Ascending aorta (tissue), 2 donors: ENCODE measurements at regions of chr3 and their contacts with region 1.

Region 1: DNA sequence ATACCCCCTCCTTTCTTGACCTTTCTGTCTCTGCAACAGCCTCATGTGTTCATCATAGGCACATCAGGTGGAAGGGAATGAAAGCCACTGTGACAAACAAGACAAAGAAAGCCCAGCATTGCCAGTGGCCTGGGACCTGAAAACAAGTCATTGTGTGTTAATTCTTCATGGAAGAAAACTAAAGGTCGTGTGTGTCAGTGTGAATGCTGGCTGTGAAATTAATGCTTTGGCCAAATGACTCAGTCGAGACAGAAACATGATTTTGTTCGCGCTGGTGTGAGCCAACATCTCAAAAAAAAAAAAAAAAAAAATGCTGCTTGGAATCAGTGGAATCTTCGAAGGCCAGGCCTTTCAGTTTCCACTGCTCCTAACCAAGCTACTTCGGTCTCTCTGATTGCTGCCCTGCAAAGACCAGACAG is 386.5 kb upstream of the PROK2 start:
- DNase-seq: peak in 1 of 2 donors; percentile 72
- H3K4me3 ChIP-seq: peak overlapping the region; percentile 37 to 39
- H3K27ac ChIP-seq: peak overlapping the region; percentile 87 to 91
- H3K4me1 ChIP-seq: peaks cover 16 to 37% of the 10 kb centered on the region in 2 donors
- H3K27me3 ChIP-seq: no peaks in the 10 kb centered on the region
- CTCF ChIP-seq: no peak

Region 2: GRCh38 chr3:71916745-71917369 is 254.6 kb before region 1 on chr3:
- intact Hi-C with region 1: no loop called
- DNase-seq: no peak
- H3K4me3 ChIP-seq: no peak overlapping the region
- H3K27ac ChIP-seq: no peak overlapping the region
- H3K4me1 ChIP-seq: no peaks in the 10 kb centered on the region
- H3K27me3 ChIP-seq: no peaks in the 10 kb centered on the region
- CTCF ChIP-seq: no peak

Region 3: DNA sequence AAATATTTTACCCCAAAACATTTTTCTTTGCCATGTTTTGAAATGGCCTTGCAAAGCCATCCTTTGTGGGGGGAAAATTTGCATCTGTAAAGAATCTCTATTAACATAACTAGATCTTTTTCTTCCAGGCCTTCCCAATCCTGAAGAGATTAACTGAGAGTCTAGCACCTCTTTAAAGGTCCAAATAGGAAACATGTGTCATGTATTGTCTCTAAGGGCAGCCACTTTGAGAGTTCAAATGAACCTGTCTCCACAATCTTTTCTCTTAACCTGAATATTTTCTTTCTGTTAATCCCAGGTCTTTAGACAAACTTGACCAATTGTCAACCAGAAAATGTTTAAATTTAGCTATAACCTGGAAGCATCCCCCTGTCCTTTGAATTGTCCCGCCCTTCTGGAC is 149.9 kb before region 1 on chr3:
- intact Hi-C with region 1: no loop called
- DNase-seq: no peak
- H3K4me3 ChIP-seq: no peak overlapping the region
- H3K27ac ChIP-seq: no peak overlapping the region
- H3K4me1 ChIP-seq: no peaks in the 10 kb centered on the region
- H3K27me3 ChIP-seq: no peaks in the 10 kb centered on the region
- CTCF ChIP-seq: no peak

Region 4: GRCh38 chr3:72100601-72101187 is 70.8 kb before region 1 on chr3:
- intact Hi-C with region 1: loop called (anchors 5 kb)
- DNase-seq: peak; percentile 80 to 95
- H3K4me3 ChIP-seq: peak overlapping the region; percentile 35 to 54
- H3K27ac ChIP-seq: no peak overlapping the region
- H3K4me1 ChIP-seq: peaks cover 0 to 6% of the 10 kb centered on the region in 2 donors
- H3K27me3 ChIP-seq: no peaks in the 10 kb centered on the region
- CTCF ChIP-seq: no peak

Region 5: GRCh38 chr3:72123908-72124441 is 47.5 kb before region 1 on chr3:
- intact Hi-C with region 1: loop called (anchors 2 kb)
- DNase-seq: peak in 1 of 2 donors; percentile 93
- H3K4me3 ChIP-seq: no peak overlapping the region
- H3K27ac ChIP-seq: peak overlapping the region; percentile 41 to 46
- H3K4me1 ChIP-seq: peaks cover 10 to 21% of the 10 kb centered on the region in 2 donors
- H3K27me3 ChIP-seq: no peaks in the 10 kb centered on the region
- CTCF ChIP-seq: no peak

Region 6: DNA sequence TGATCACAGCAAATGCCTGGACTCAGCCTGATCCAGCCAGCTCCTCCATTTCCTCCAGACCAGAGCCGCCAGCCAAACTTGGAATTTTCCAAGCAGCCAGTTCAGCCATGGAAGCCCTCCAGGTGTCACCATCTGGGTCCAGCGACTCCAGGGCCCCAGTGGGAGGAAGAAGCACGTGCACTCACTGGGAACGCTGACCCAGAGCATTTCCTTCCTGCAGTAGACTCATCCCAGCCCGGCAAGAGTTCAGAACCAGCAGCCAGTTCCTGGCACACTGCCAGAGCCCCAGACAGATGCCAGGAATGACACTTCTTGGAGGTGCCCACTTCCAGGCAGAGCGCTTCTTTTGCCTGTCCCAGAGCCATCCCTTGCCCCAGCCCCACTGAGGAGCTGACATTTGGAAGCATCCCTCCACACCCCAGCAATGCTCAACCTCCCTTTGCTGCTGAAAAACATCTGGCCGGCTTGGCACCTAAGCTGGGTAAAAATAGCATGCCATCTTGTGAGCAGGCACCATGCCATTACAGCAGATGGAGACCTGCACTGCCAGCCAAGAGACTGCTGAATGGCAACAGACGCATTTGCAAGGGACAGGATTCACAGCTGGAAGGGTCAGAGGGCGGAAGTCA is 73.8 kb after region 1 on chr3:
- intact Hi-C with region 1: loop called (anchors 5 kb)
- DNase-seq: peak; percentile 18 to 83
- H3K4me3 ChIP-seq: no peak overlapping the region
- H3K27ac ChIP-seq: peak overlapping the region; percentile 69 to 79
- H3K4me1 ChIP-seq: peaks cover 24 to 43% of the 10 kb centered on the region in 2 donors
- H3K27me3 ChIP-seq: no peaks in the 10 kb centered on the region
- CTCF ChIP-seq: no peak